ENCODE measurements at regions of chr7 and their contacts with region 1.

Region 1: DNA sequence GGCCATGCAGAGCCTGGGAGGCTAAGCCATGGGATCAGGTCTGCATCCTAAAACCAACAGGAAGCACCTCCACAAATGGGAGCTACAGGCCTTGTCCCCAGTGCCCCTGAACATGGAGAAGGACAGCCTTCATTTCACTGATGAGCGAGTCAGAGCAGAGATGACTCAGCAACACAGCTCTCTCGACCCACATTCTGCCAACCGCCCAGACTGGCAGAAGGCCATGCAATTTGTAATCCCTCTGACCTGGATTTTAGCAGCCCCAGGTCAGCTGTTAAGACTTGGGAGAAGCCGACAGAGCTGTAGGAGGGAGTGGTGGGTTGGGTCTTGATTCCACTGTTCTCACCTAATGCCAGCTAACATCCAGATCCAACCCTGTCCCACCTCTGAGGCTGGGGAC is 25.5 kb downstream of the VOPP1 start:
- DNase-seq: peak; percentile 97
- H3K4me3 Mint-ChIP-seq: peak overlapping the region; percentile 6
- H3K27ac Mint-ChIP-seq: no peak overlapping the region
- H3K4me1 Mint-ChIP-seq: peaks cover 46% of the 10 kb centered on the region
- H3K27me3 Mint-ChIP-seq: no peaks in the 10 kb centered on the region
- CTCF ChIP-seq: no peak

Region 2: DNA sequence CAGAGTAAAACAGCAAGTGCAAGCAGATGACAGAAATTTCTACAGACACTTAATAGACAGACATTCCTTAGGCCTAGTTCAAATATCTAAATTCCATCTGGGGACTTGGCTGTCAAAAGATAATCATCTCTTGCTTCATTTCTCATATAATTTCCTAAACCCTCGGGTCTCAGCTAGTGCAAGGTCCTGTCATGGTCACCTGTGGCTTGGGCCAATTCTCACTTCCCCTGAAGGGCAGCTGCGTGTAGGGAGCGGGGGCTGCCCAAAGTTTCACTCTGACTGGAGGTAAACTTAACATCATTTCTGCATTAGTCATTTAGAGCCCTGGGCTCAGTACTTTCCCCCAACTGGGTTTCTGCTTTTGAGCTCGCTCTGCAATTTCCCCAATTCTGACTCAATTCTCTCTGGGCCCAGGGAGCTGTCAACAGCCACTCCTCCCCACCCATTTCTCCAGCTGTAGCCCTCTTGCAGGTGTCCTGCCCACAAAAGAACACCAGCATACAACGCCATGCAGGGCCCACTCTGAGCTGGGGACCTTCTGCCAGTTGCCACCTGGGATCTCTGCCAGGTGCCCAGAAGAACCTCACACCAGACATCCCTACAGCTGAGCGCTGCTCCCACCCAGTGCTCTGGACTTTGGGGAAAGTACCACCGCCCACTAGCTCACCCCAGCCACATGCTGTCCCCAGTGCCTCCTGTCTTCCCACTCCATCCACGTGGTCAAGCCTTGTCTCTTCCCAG is 12.5 kb before region 1 on chr7:
- CTCF ChIA-PET with region 1: interaction called, 16 read pairs
- POLR2A ChIA-PET with region 1: interaction called, 42 read pairs
- intact Hi-C with region 1: loop called (anchors 1 kb)
- DNase-seq: peak; percentile 83
- H3K4me3 Mint-ChIP-seq: peak overlapping the region; percentile 1
- H3K27ac Mint-ChIP-seq: peak overlapping the region; percentile 69
- H3K4me1 Mint-ChIP-seq: peaks cover 61% of the 10 kb centered on the region
- H3K27me3 Mint-ChIP-seq: no peaks in the 10 kb centered on the region
- CTCF ChIP-seq: no peak

Region 3: GRCh38 chr7:55593515-55594318 is 46.9 kb after region 1 on chr7:
- CTCF ChIA-PET with region 1: interaction called, 7 read pairs
- POLR2A ChIA-PET with region 1: no interaction called
- intact Hi-C with region 1: loop called (anchors 10 kb)
- DNase-seq: peak; percentile 75
- H3K4me3 Mint-ChIP-seq: no peak overlapping the region
- H3K27ac Mint-ChIP-seq: no peak overlapping the region
- H3K4me1 Mint-ChIP-seq: peaks cover 6% of the 10 kb centered on the region
- H3K27me3 Mint-ChIP-seq: peaks cover 10% of the 10 kb centered on the region
- CTCF ChIP-seq: peak; percentile 85

Measured in MCF 10A (cell line).